Caco-2 (cell line): ENCODE measurements at regions of chr14 and their contacts with region 1.

Region 1: DNA sequence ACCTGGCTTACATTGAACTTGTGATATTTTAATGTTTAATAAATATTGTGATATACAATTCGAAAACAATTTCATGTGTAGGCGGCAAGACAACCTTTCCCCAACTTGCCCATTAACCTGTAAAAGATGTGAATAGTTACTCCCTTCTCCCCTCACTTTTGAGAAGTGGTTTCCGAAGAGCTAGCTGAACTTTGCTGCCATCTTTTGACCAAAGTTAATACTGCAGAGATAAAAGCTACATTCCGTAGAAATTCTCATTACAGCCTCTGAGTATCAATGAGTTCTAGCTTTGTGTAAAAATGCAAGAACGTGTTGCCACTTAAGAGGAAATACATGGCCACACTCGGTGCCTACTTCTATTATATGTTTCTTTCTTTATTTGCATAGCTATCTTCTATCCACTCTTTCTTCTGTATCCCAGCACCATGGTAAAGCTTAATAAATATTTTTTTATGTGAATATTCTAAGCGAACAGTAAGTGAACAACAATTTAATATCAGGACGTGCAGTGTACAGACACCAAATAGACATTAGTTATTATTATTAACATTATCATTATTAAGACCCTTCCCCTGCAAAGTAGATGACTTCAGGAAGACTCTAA is 105.1 kb upstream of the TMEM260 start:
- DNase-seq: peak in 1 of 2 experiments; percentile 59
- H3K4me3 ChIP-seq: no peak overlapping the region
- H3K4me3 Mint-ChIP-seq: no peak overlapping the region
- H3K27ac Mint-ChIP-seq: no peak overlapping the region
- H3K4me1 ChIP-seq: no peaks in the 10 kb centered on the region
- H3K4me1 Mint-ChIP-seq: no peaks in the 10 kb centered on the region
- H3K27me3 ChIP-seq: no peaks in the 10 kb centered on the region
- H3K27me3 Mint-ChIP-seq: peaks cover 23% of the 10 kb centered on the region
- CTCF ChIP-seq: peak; percentile 73 to 76

Region 2: GRCh38 chr14:55438066-55438683 is 1036.3 kb before region 1 on chr14:
- CTCF ChIA-PET with region 1: interaction called, 13 read pairs
- POLR2A ChIA-PET with region 1: no interaction called
- intact Hi-C with region 1: loop called (anchors 1 kb)
- DNase-seq: peak in 1 of 2 experiments; percentile 49
- H3K4me3 ChIP-seq: no peak overlapping the region
- H3K4me3 Mint-ChIP-seq: no peak overlapping the region
- H3K27ac Mint-ChIP-seq: no peak overlapping the region
- H3K4me1 ChIP-seq: no peaks in the 10 kb centered on the region
- H3K4me1 Mint-ChIP-seq: no peaks in the 10 kb centered on the region
- H3K27me3 ChIP-seq: no peaks in the 10 kb centered on the region
- H3K27me3 Mint-ChIP-seq: peaks cover 3% of the 10 kb centered on the region
- CTCF ChIP-seq: peak; percentile 69 to 70

Region 3: DNA sequence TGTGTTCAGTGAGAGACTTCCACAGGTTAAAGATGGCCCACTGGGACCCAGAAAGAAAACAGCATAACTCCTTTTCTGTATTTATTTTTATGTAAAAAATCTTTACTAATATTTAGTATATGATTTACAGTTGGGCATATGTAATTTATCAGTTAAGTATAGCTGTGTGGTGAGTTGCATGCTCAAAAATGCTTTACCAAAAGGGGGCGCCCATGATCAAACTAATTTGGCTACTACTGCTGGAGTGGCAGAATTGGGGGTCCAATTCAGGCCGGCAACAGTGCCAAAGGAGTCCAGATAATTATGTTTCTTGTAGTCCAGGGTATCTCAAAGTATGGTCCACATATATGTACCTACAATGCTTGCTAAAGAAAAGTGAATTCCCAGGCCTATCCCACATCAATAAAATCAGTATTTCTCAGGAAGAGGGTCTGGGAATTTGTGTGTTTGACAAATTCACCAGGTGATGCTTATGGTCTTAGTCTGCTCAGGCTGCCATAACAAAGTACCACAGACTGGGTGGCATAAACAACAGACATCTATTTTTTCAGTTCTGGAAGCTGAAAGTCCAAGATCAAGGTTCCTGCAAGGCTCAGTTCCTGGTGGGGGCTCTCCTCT is 742.5 kb before region 1 on chr14:
- CTCF ChIA-PET with region 1: interaction called, 5 read pairs
- POLR2A ChIA-PET with region 1: no interaction called
- intact Hi-C with region 1: loop called (anchors 10 kb)
- DNase-seq: peak in 1 of 2 experiments; percentile 45
- H3K4me3 ChIP-seq: no peak overlapping the region
- H3K4me3 Mint-ChIP-seq: no peak overlapping the region
- H3K27ac Mint-ChIP-seq: no peak overlapping the region
- H3K4me1 ChIP-seq: no peaks in the 10 kb centered on the region
- H3K4me1 Mint-ChIP-seq: peaks cover 15% of the 10 kb centered on the region
- H3K27me3 ChIP-seq: no peaks in the 10 kb centered on the region
- H3K27me3 Mint-ChIP-seq: no peaks in the 10 kb centered on the region
- CTCF ChIP-seq: peak; percentile 52 to 64

Region 4: DNA sequence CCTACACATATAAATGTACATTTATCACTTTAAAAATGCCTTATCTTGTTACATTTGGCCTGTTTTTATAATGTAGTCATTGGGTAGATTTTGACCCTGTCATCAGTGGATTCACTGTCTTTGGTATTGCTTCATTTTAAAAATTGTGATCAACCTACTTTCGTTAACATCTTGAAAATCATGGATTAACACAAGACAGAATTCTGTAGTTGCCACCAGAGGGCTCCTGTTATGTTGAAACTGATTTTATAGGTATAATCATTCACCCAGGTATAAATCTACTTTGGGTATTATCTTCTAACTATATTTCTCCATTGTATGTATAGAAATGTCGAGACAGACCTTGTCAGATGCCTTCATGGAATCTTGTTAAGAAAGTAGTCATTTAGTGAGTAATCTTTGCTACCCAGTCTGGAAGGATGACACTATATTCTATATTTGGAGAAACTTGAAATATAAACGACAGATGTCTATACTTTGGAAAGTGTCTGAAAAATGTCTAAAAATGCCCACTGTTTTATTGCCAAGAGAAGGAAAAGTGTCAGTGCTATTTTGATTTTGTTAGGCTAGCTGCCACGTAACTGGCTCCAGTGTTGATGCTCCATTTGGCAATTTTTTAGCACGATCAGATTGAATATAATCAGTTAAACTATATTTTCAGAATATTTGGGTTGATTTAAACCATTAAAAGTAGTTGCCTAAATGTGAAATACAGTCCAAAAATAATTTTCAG is 226.9 kb before region 1 on chr14:
- CTCF ChIA-PET with region 1: no interaction called
- POLR2A ChIA-PET with region 1: no interaction called
- intact Hi-C with region 1: loop called (anchors 1 kb)
- DNase-seq: no peak
- H3K4me3 ChIP-seq: no peak overlapping the region
- H3K4me3 Mint-ChIP-seq: no peak overlapping the region
- H3K27ac Mint-ChIP-seq: no peak overlapping the region
- H3K4me1 ChIP-seq: no peaks in the 10 kb centered on the region
- H3K4me1 Mint-ChIP-seq: no peaks in the 10 kb centered on the region
- H3K27me3 ChIP-seq: no peaks in the 10 kb centered on the region
- H3K27me3 Mint-ChIP-seq: no peaks in the 10 kb centered on the region
- CTCF ChIP-seq: peak; percentile 21 to 22

Region 5: GRCh38 chr14:56422703-56423213 is 51.8 kb before region 1 on chr14:
- CTCF ChIA-PET with region 1: interaction called, 6 read pairs
- POLR2A ChIA-PET with region 1: no interaction called
- intact Hi-C with region 1: loop called (anchors 1 kb)
- DNase-seq: peak in 1 of 2 experiments; percentile 35
- H3K4me3 ChIP-seq: no peak overlapping the region
- H3K4me3 Mint-ChIP-seq: no peak overlapping the region
- H3K27ac Mint-ChIP-seq: no peak overlapping the region
- H3K4me1 ChIP-seq: no peaks in the 10 kb centered on the region
- H3K4me1 Mint-ChIP-seq: no peaks in the 10 kb centered on the region
- H3K27me3 ChIP-seq: no peaks in the 10 kb centered on the region
- H3K27me3 Mint-ChIP-seq: no peaks in the 10 kb centered on the region
- CTCF ChIP-seq: peak; percentile 56 to 74